Gastrocnemius medialis (tissue), 4 donors: ENCODE measurements at regions of chrX and their contacts with region 1.

Region 1: DNA sequence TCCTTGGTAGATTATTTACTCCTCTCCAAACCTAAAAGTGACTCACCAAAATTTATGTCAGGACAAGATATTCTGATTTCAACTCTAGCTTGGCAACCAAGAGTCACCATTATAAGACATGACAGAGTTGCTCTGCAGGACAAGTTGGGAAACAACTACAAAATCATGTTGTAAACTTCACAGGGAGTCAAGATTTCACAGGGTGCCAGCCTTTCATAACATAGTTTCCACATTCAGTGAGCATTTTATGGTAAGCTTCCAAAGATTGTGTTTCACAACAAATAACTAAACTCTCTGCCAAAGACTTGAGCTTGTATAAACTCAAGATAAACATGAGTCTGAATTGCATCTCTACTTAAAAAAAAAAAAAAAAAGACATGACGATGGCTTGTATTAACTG is 121.0 kb upstream of the DIAPH2 start:
- DNase-seq: peak; percentile 2 to 26
- ATAC-seq: peak; percentile 97 to 98
- H3K4me3 ChIP-seq: no peak overlapping the region
- H3K27ac ChIP-seq: peak overlapping the region; percentile 61 to 66 (median 64)
- H3K4me1 ChIP-seq: peaks cover 0 to 15% of the 10 kb centered on the region in 2 donors
- H3K27me3 ChIP-seq: no peaks in the 10 kb centered on the region
- CTCF ChIP-seq: no peak
- POLR2A ChIP-seq: no peak

Region 2: GRCh38 chrX:96436105-96436504 is 127.6 kb before region 1 on chrX:
- in situ Hi-C with region 1: no loop called
- intact Hi-C with region 1: no loop called
- DNase-seq: no peak
- ATAC-seq: peak in 1 of 2 donors; percentile 50
- H3K4me3 ChIP-seq: no peak overlapping the region
- H3K27ac ChIP-seq: peak overlapping the region in 1 of 4 donors; percentile 6
- H3K4me1 ChIP-seq: no peaks in the 10 kb centered on the region
- H3K27me3 ChIP-seq: no peaks in the 10 kb centered on the region
- CTCF ChIP-seq: no peak
- POLR2A ChIP-seq: no peak

Region 3: GRCh38 chrX:96684339-96685209 is 120.9 kb after region 1 on chrX and contains the start of gene DIAPH2:
- in situ Hi-C with region 1: no loop called
- intact Hi-C with region 1: loop called (anchors 5 kb)
- DNase-seq: peak; percentile 64 to 79
- ATAC-seq: peak; percentile 83 to 90
- H3K4me3 ChIP-seq: peak within 1 kb of the TSS; percentile 71 to 82 (median 80)
- H3K27ac ChIP-seq: peak within 1 kb of the TSS; percentile 86 to 90 (median 87)
- H3K4me1 ChIP-seq: peaks cover 3 to 10% of the 10 kb centered on the region in 2 donors
- H3K27me3 ChIP-seq: no peaks in the 10 kb centered on the region
- CTCF ChIP-seq: peak in 3 of 5 experiments; percentile 19 to 41 (median 41)
- POLR2A ChIP-seq: peak; percentile 59 to 60
- total RNA-seq, gene DIAPH2: 12.1 to 41.6 (median 29.1) TPM